Gastrocnemius medialis (tissue), 4 donors: ENCODE measurements at regions of chr2 and their contacts with region 1.

Region 1: GRCh38 chr2:10408649-10409579 is 39.2 kb downstream of the ODC1 start:
- DNase-seq: peak; percentile 65 to 77
- ATAC-seq: peak; percentile 28 to 42
- H3K4me3 ChIP-seq: no peak overlapping the region
- H3K27ac ChIP-seq: peak overlapping the region; percentile 62 to 82 (median 73)
- H3K4me1 ChIP-seq: peaks cover 52 to 54% of the 10 kb centered on the region in 2 donors
- H3K27me3 ChIP-seq: no peaks in the 10 kb centered on the region
- CTCF ChIP-seq: peak; percentile 88 to 97 (median 94)
- POLR2A ChIP-seq: no peak

Region 2: GRCh38 chr2:10072656-10073480 is 336.0 kb before region 1 on chr2:
- in situ Hi-C with region 1: no loop called
- intact Hi-C with region 1: loop called (anchors 2 kb)
- DNase-seq: peak; percentile 63 to 74
- ATAC-seq: peak; percentile 93 to 98
- H3K4me3 ChIP-seq: no peak overlapping the region
- H3K27ac ChIP-seq: no peak overlapping the region
- H3K4me1 ChIP-seq: peaks cover 0 to 5% of the 10 kb centered on the region in 2 donors
- H3K27me3 ChIP-seq: peaks cover 15 to 17% (median 16%) of the 10 kb centered on the region in 3 donors
- CTCF ChIP-seq: peak; percentile 67 to 91 (median 82)
- POLR2A ChIP-seq: no peak

Region 3: GRCh38 chr2:10135296-10136089 is 273.4 kb before region 1 on chr2:
- in situ Hi-C with region 1: loop called in 2 of 4 experiments (anchors 5 to 10 kb)
- intact Hi-C with region 1: loop called (anchors 5 kb)
- DNase-seq: no peak
- ATAC-seq: no peak
- H3K4me3 ChIP-seq: no peak overlapping the region
- H3K27ac ChIP-seq: no peak overlapping the region
- H3K4me1 ChIP-seq: no peaks in the 10 kb centered on the region
- H3K27me3 ChIP-seq: no peaks in the 10 kb centered on the region
- CTCF ChIP-seq: no peak
- POLR2A ChIP-seq: no peak

Region 4: DNA sequence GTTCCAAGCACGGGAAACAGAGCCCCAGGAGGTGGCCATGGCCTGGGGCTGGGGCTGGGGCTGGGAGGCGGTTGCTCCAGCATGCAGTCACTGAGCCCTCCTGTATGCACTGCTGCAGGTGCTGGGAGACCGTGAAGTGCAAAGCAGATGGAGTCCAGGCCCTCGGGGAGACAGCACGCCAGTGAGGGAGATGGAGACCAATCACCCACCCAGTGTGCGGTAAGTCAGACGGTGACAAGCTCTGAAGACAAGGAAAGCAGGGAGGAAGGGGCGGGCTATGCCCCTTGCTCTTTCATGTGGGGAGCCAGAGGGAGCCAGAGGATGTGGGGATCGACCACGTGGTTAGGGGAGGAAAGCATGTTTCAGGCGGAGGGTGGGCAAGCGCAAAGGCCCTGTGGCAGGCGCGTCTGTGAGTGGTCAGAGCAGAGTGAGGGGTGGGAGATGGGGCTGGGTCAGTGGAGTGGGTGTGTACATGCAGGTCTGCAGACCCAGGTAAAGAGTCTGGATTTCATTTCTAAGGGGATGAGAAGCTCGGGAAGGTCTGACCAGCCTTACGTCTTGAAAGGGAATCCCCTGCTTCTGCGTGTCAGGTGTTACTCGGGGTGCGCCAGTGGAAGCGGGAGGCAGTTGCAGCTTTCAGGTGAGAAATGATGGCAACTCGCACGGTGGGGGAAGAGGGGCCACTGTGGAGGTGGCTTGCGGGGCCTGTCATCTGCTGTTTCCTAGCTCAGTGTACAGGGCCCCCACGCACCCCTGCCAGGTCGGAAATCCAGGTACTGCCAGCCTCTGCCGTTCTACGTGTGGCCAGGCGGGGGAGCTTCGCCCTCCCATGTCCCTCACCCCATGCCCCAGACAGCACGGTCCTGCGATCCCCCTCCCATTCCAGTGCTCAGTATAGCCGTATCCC is 266.9 kb before region 1 on chr2:
- in situ Hi-C with region 1: loop called in 1 of 4 experiments (anchors 10 kb)
- intact Hi-C with region 1: loop called (anchors 5 kb)
- DNase-seq: no peak
- ATAC-seq: no peak
- H3K4me3 ChIP-seq: no peak overlapping the region
- H3K27ac ChIP-seq: no peak overlapping the region
- H3K4me1 ChIP-seq: peaks cover 0 to 7% of the 10 kb centered on the region in 2 donors
- H3K27me3 ChIP-seq: no peaks in the 10 kb centered on the region
- CTCF ChIP-seq: peak in 3 of 5 experiments; percentile 31 to 34 (median 31)
- POLR2A ChIP-seq: no peak

Region 5: DNA sequence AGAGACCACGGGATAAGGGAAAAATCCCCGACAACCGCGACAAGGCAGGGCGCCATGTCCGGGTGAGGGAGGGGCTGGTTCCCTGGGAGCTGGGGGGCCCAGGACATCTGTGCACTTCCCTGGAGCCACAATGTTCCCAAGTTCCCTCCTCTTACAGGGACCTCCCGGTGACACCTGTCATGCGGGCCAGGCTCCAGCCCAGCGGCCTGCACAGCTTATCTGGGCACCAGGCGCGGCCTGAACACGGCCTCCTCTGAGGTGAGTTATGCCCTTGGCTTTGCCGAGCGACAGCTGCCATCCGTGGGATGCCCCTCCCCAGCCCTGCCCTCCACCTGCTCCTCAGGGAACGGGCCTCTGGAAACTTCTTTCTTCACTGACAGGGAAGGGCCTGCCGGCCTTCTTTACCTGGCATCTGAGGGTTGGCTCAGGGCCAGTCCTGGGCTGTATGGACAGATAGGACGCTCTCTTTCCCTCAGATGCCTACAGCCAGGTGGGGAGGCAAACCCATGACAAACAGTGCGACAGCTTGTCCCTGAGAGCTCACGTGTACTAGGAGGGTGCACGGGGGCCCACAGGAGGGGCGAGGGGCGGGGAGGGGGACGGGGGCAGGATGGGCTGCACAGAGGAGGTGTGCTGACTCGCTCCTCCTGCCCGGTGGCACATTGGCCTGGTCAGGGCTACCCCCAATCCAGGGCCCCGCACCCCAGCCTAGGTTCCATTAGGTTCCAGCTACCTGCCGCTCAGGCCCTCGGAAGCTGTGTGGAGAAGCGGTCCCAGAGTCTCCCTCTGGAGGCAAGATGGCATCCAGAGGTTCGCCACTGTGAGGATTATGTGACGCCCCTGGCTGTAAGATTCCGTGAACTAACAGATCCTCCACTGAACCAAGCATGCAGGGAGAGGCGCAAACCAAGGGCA is 141.1 kb before region 1 on chr2:
- in situ Hi-C with region 1: no loop called
- intact Hi-C with region 1: loop called (anchors 1 kb)
- DNase-seq: peak; percentile 54 to 86
- ATAC-seq: peak; percentile 77 to 87
- H3K4me3 ChIP-seq: no peak overlapping the region
- H3K27ac ChIP-seq: peak overlapping the region in 2 of 4 donors; percentile 2 to 44
- H3K4me1 ChIP-seq: peaks cover 0 to 8% of the 10 kb centered on the region in 2 donors
- H3K27me3 ChIP-seq: no peaks in the 10 kb centered on the region
- CTCF ChIP-seq: no peak
- POLR2A ChIP-seq: no peak

Region 6: GRCh38 chr2:10302479-10303180 is 106.3 kb before region 1 on chr2 and contains the start of gene HPCAL1:
- in situ Hi-C with region 1: no loop called
- intact Hi-C with region 1: loop called (anchors 2 kb)
- DNase-seq: peak; percentile 63 to 73
- ATAC-seq: peak; percentile 83 to 86
- H3K4me3 ChIP-seq: peak within 1 kb of the TSS; percentile 63 to 86 (median 78)
- H3K27ac ChIP-seq: peak within 1 kb of the TSS; percentile 60 to 79 (median 75)
- H3K4me1 ChIP-seq: peaks cover 18 to 22% of the 10 kb centered on the region in 2 donors
- H3K27me3 ChIP-seq: no peaks in the 10 kb centered on the region
- CTCF ChIP-seq: peak in 4 of 5 experiments; percentile 33 to 64 (median 44)
- POLR2A ChIP-seq: peak; percentile 84 to 89
- total RNA-seq, gene HPCAL1: 29.0 to 45.5 (median 34.5) TPM

Region 7: DNA sequence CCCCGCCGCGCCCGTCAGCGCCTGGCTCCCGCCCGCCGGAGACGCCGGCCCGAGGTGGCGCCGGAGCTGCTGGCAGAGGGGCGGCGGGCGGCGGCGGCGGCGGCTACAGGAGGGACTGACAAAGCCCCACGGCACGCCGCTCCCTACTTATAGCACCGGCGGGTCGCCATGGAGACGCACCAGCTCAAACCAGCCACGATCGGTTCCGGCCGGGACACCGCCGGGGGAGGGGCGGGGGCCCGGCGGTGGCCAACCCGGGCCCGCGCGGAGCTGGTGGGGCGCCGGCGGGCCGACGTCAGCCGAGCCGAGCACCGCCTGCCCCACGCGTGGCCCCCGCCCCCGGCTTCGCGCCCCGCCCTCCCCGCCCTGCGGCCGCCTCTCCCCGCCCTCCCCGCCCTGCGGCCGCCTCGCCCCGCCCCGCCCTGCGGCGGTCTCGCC is 39.3 kb after region 1 on chr2 and contains the start of gene ODC1:
- in situ Hi-C with region 1: no loop called
- intact Hi-C with region 1: loop called (anchors 1 kb)
- DNase-seq: peak; percentile 88 to 94
- ATAC-seq: peak; percentile 69 to 77
- H3K4me3 ChIP-seq: peak within 1 kb of the TSS; percentile 67 to 90 (median 80)
- H3K27ac ChIP-seq: peak within 1 kb of the TSS; percentile 90 to 98 (median 95)
- H3K4me1 ChIP-seq: peaks cover 30 to 32% of the 10 kb centered on the region in 2 donors
- H3K27me3 ChIP-seq: no peaks in the 10 kb centered on the region
- CTCF ChIP-seq: no peak
- POLR2A ChIP-seq: peak; percentile 83 to 92
- total RNA-seq, gene ODC1: 134 to 339 (median 255) TPM

Region 8: DNA sequence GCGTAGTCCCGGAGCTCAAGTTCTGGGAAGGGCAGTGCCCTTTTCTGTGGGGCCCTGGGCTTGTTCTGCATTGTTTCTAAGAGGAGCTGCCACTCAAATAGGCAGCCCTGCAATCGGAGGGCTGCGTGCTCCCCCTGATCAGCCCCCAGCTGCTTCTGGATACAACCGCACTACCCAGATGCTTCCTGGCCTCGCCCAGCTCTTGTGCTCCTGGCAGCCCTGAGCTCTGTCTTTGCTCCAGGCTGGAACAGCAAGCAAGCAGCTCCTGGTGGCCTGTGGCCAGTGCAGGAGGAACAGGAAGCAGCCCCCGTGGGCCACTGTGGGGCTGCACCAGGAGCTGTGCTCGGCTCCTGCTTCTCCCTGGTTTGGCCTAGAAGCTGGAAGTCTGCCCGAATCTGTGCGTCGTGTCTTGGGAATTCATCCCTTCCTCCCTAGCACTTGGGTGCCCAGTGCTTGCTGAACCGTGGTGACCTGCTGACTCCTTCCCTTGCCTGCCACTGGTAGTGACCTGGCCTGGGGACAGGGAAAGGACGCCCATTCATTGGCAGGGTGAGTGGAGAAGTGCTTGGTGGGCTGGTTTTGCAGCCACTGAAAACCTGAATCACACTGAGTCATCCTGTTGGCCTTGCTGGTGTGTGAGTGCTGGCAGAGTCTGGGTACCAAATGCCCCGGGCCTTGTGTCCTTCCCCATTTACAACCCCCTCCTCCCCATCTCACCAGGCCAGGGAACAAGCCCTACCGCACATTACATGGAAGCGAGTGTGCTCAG is 1288.4 kb after region 1 on chr2:
- in situ Hi-C with region 1: no loop called
- intact Hi-C with region 1: no loop called
- DNase-seq: peak; percentile 90 to 98
- ATAC-seq: peak; percentile 56 to 58
- H3K4me3 ChIP-seq: peak overlapping the region; percentile 27 to 44 (median 41)
- H3K27ac ChIP-seq: peak overlapping the region; percentile 93 to 100 (median 98)
- H3K4me1 ChIP-seq: peaks cover 60 to 65% of the 10 kb centered on the region in 2 donors
- H3K27me3 ChIP-seq: no peaks in the 10 kb centered on the region
- CTCF ChIP-seq: no peak
- POLR2A ChIP-seq: no peak